A549 (cell line): ENCODE measurements at regions of chr19 and their contacts with region 1.

Region 1: DNA sequence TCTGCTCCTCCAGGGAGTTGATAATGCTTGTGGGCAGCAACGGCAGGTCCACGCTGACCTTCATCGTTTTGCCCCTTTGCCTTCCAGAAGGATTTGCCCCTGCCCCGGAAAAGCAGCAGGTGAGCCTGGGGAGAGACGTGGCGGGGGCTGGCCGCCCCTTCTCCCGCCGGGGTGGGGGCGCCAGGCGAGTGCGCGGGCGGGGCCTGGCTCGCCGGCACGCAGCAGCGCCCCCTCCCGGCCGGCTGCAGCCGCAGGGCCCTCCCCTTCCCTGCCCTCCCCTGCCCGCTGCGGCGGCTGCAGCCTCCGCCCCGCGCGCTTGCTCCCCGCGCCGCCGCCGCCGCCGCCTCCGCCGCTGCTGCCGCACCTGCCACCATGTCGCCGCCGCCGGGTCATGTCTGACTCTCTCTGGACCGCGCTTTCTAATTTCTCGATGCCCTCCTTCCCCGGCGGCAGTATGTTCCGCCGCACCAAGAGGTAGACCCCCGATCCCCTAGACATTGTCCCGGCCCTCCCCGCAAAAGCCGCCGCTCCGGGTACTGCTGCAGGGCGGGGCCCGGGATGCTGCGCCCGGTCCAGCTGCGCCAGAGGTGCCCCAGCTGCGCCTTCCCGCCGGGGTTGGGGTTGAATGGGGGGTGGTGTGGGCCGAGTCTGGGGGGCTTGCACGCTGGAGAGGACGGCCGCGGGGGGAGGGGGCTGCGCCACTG is at the start of gene MAST1:
- DNase-seq: peak in 1 of 2 experiments; percentile 46
- ATAC-seq: peak; percentile 59 to 68
- H3K4me3 ChIP-seq: peak within 1 kb of the TSS; percentile 78
- H3K27ac ChIP-seq: peak within 1 kb of the TSS; percentile 71 to 87
- H3K4me1 ChIP-seq: peaks cover 10% of the 10 kb centered on the region; the same call in 1 of the 3 replicates
- CTCF ChIP-seq: peak; percentile 69
- EP300 ChIP-seq: no peak
- POLR2A ChIP-seq: no peak
- RAD21 ChIP-seq: no peak
- polyA plus RNA-seq, gene MAST1: 1.4 and 1.8 TPM in 2 replicates

Region 2: GRCh38 chr19:12681074-12681951 is 157.0 kb before region 1 on chr19 and contains the start of gene DHPS:
- CTCF ChIA-PET with region 1: no interaction called
- POLR2A ChIA-PET with region 1: interaction called, 13 read pairs
- DNase-seq: peak; percentile 86 to 98
- ATAC-seq: peak; percentile 83 to 85
- H3K4me3 ChIP-seq: peak within 1 kb of the TSS; percentile 98
- H3K27ac ChIP-seq: peak within 1 kb of the TSS; percentile 97 to 100
- H3K4me1 ChIP-seq: no peaks in the 10 kb centered on the region
- CTCF ChIP-seq: no peak
- EP300 ChIP-seq: no peak
- POLR2A ChIP-seq: peak; percentile 41
- RAD21 ChIP-seq: no peak
- polyA plus RNA-seq, gene DHPS: 63.7 and 71.9 TPM in 2 replicates

Region 3: DNA sequence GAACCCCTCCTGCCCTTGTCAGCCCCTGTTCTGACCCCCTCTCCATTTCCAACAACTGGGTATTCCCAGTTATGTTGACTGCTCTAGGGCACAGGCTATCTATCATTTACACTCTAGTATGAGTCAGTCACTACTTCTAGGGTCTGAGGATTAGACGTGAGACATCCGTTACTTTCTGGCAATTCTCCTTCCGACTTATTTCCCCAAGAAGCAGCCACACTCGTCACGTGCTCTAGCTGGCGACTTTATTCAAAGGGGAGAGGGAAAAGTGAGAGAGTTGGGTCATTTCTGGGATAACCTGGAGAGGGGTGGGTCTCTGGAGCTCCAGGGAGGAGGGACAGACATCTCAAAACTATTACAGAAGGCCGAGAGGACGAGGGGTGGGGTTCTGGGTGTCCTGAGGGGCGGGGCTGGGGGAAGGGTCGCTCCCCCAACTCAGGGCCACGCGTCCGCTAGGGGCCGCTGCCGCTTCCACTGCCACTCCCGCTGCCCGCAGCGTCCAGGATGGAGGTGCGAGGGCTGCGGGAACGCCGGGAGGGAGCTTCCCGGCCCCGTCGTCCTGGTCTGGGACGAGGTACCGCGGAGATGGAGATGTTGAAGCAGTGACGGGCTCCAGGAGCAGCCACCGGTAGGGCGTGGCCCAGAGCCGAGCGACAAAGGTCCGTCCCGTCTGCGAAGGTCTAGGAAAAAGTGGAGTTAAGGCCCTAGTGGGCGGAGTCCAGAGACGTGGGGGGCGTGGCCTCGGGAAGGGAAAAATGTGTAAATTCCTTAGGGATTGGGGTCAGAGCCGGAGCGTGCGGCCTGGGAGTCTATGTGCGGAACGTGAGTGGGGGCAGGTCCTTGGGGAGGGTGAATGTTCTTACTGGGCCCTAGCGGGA is 12.8 kb before region 1 on chr19:
- CTCF ChIA-PET with region 1: interaction called, 11 read pairs
- POLR2A ChIA-PET with region 1: no interaction called
- DNase-seq: peak in 1 of 2 experiments; percentile 57
- ATAC-seq: peak; percentile 72 to 86
- H3K4me3 ChIP-seq: peak overlapping the region; percentile 27; the same call in 2 of the 3 replicates
- H3K27ac ChIP-seq: no peak overlapping the region
- H3K4me1 ChIP-seq: no peaks in the 10 kb centered on the region
- CTCF ChIP-seq: peak; percentile 38
- EP300 ChIP-seq: no peak
- POLR2A ChIP-seq: no peak
- RAD21 ChIP-seq: no peak

Region 4: GRCh38 chr19:12930002-12930653 is 91.8 kb after region 1 on chr19:
- CTCF ChIA-PET with region 1: no interaction called
- POLR2A ChIA-PET with region 1: no interaction called
- DNase-seq: no peak
- ATAC-seq: no peak
- H3K4me3 ChIP-seq: no peak overlapping the region
- H3K27ac ChIP-seq: no peak overlapping the region
- H3K4me1 ChIP-seq: peaks cover 8% of the 10 kb centered on the region; the same call in 2 of the 3 replicates
- CTCF ChIP-seq: no peak
- EP300 ChIP-seq: no peak
- POLR2A ChIP-seq: no peak
- RAD21 ChIP-seq: no peak